Heart left ventricle (tissue), 16 donors: ENCODE measurements at regions of chr15 and their contacts with region 1.

Region 1: DNA sequence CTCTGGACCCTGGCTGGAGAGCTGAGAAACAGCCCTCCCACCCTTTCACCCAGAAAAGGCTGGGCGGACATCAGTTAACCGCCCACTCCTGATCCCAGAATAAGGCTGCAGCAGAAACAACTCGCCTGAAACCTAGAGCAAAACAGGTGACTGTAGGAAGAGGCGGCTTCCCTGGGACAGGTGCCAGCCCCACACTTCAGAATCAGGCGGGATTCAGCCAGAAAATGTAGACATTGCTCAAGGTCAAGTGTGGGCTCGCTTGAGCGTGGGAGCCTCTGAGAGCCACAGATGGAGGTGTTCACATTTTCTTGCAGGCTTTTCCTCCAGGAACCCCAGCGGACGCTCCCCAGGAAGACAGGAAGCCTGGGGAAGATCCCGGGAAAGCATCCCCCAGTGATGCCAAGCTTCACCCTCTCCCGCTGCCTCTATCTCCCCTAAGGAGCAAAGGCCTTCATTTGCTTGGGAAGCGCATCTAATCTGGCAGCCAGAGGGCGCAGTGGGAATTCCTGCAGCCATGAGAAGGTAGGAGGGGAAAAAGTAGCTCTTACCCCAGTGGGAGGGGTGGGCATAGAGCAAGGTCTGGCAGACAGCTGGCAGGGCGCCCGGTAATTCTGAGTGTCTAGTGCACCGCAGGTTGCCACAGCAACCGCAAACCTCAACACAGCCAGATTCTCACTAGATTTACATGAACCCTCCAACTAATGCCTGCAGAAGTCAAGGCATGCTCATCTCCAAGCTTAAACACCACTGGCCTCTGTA is 77.7 kb downstream of the OCA2 start:
- DNase-seq: peak in 3 of 5 donors; percentile 34 to 61 (median 37)
- ATAC-seq: peak in 3 of 4 donors; percentile 18 to 51 (median 33)
- H3K4me3 ChIP-seq: no peak overlapping the region
- H3K27ac ChIP-seq: no peak overlapping the region
- H3K4me1 ChIP-seq: no peaks in the 10 kb centered on the region
- H3K27me3 ChIP-seq: no peaks in the 10 kb centered on the region
- CTCF ChIP-seq: peak; percentile 19 to 62 (median 45)
- POLR2A ChIP-seq: no peak

Region 2: GRCh38 chr15:27912283-27912682 is 109.2 kb before region 1 on chr15:
- intact Hi-C with region 1: no loop called
- DNase-seq: no peak
- ATAC-seq: no peak
- H3K4me3 ChIP-seq: no peak overlapping the region
- H3K27ac ChIP-seq: no peak overlapping the region
- H3K4me1 ChIP-seq: no peaks in the 10 kb centered on the region
- H3K27me3 ChIP-seq: no peaks in the 10 kb centered on the region
- CTCF ChIP-seq: no peak
- POLR2A ChIP-seq: no peak

Region 3: GRCh38 chr15:28123408-28124023 is 102.1 kb after region 1 on chr15:
- intact Hi-C with region 1: loop called in 4 of 10 experiments (anchors 5 to 10 kb)
- DNase-seq: peak; percentile 46 to 72 (median 60)
- ATAC-seq: peak in 3 of 4 donors; percentile 38 to 67 (median 56)
- H3K4me3 ChIP-seq: no peak overlapping the region
- H3K27ac ChIP-seq: no peak overlapping the region
- H3K4me1 ChIP-seq: peaks cover 0 to 10% (median 0%) of the 10 kb centered on the region in 12 donors
- H3K27me3 ChIP-seq: no peaks in the 10 kb centered on the region
- CTCF ChIP-seq: peak; percentile 35 to 72 (median 64)
- POLR2A ChIP-seq: no peak